HEK293 (cell line): ENCODE measurements at regions of chr18 and their contacts with region 1.

Region 1: GRCh38 chr18:43661570-43661969 is 384.3 kb upstream of the SYT4 start:
- H3K4me3 ChIP-seq: no peak overlapping the region
- H3K27ac ChIP-seq: no peak overlapping the region
- H3K4me1 ChIP-seq: no peaks in the 10 kb centered on the region
- CTCF ChIP-seq: no peak

Region 2: DNA sequence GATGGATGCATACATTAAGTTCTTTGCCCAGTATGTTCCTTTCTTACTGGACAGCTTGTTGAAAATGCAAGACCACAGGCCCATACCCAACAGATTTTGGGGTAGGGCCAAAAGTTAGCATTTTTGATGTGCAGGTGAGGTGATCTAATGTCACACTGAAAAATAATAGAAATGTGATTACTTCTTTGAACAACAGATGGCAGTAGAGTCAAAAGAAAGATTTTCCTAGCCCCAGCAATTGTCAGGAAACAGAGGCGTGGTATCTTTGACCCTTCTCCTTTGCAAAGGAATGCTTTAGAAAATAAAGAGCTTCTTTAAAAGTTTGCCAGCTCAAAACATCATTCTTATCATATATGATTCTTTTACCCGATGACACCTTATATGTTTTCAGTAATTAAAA is 40.6 kb before region 1 on chr18:
- CTCF ChIA-PET with region 1: interaction called, 10 read pairs
- POLR2A ChIA-PET with region 1: no interaction called
- H3K4me3 ChIP-seq: no peak overlapping the region
- H3K27ac ChIP-seq: no peak overlapping the region
- H3K4me1 ChIP-seq: no peaks in the 10 kb centered on the region
- CTCF ChIP-seq: no peak

Region 3: DNA sequence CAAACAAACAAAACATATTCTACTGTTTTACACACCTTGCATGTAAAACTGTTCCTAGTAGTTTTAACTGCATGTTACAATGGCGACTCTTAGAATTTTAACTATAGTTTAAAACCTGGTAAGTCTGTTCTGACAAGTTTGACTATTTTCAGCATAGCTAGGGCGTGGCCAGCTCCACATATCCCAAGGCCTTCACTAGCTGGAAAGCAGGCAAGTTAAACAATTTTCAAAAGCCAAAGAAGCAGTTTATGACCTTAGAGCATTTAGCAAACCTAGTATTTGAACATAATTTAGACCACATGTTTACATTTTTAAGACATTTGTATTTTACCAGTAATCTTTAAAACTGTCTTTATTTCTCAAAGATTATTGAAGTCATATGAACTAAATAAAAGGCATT is 18.5 kb after region 1 on chr18:
- CTCF ChIA-PET with region 1: interaction called, 10 read pairs
- POLR2A ChIA-PET with region 1: no interaction called
- H3K4me3 ChIP-seq: no peak overlapping the region
- H3K27ac ChIP-seq: no peak overlapping the region
- H3K4me1 ChIP-seq: no peaks in the 10 kb centered on the region
- CTCF ChIP-seq: no peak

Region 4: DNA sequence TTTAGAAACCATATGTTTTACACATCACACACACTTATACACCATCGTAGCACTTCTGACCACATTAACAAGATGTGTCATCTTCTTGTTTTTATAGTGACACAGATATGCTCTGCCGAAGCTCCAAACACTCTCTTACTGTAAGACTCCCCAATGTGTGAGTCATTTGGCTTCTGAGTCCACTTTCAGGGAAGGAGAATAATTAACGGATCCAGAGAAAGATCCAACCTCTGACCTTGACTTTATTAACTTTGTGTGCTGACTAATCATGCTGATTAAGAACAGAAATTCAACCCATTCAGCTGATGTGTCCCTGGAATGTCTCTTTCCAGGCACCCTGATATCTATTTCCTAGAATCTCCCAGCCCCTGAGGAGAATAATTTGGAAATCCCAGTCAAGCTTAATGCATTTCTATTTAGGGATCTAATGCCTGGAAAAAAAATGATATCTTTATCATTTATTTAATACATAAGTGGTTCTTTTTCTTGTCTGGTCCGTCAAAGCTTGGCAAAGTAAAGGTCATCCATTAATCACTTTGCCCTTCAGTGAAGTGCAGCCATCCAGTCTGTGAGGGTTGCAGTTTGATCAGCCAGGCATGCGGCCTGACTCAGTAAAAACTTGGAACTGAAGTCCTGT is 231.5 kb after region 1 on chr18:
- CTCF ChIA-PET with region 1: no interaction called
- POLR2A ChIA-PET with region 1: no interaction called
- H3K4me3 ChIP-seq: no peak overlapping the region
- H3K27ac ChIP-seq: no peak overlapping the region
- H3K4me1 ChIP-seq: no peaks in the 10 kb centered on the region
- CTCF ChIP-seq: no peak